PC-3 (cell line): ENCODE measurements at regions of chr6 and their contacts with region 1.

Region 1: DNA sequence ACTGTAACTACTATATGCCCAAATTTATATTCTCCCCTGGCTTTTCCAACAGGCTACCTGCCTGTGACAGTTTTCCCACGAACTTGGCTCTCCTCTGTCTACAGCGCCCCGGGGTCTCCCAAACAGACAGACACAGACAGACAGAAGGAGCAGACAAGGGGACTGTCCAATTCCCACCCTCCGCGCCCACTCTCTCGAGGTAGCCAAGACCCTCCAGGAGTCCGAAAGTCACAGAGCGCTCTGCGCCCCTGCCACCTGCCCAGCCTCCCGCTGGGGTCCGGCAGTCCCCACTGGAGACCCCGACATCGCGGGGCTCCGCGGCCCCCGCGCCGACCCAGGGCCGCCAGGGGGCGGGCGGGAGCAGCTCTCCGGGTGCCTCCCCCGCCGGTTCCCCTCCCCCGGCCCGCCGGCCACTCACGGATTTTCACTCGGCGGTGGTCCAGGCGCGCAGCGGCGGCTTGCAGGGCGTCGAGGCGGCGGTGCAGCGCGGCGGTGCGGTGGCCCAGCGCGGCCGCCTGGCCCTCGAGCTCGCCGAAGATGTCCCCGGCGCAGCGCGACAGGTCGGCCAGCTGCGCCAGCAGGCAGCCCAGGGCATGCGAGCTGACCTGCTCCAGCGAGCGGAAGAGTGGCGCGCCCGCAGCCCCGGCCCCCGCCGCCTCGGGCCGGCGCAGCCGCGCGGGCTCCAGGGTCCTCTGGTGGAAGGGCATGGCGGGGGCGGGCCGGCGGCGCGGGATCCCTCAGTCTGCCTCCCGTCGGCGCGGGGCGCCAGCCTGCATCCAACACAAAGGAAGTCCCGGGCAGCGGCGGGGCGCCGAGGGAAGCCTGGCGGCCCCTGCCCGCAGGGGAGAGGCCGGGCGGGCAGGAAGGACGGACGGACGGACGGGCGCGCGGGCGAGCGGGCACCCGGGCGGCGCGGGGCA is 81.3 kb upstream of the CCDC28A start:
- DNase-seq: peak; percentile 56
- ATAC-seq: peak; percentile 57
- H3K4me3 ChIP-seq: peak overlapping the region; percentile 89
- H3K27ac ChIP-seq: peak overlapping the region; percentile 34
- H3K4me1 ChIP-seq: peaks cover 7% of the 10 kb centered on the region
- H3K27me3 ChIP-seq: no peaks in the 10 kb centered on the region
- CTCF ChIP-seq: peak; percentile 72

Region 2: DNA sequence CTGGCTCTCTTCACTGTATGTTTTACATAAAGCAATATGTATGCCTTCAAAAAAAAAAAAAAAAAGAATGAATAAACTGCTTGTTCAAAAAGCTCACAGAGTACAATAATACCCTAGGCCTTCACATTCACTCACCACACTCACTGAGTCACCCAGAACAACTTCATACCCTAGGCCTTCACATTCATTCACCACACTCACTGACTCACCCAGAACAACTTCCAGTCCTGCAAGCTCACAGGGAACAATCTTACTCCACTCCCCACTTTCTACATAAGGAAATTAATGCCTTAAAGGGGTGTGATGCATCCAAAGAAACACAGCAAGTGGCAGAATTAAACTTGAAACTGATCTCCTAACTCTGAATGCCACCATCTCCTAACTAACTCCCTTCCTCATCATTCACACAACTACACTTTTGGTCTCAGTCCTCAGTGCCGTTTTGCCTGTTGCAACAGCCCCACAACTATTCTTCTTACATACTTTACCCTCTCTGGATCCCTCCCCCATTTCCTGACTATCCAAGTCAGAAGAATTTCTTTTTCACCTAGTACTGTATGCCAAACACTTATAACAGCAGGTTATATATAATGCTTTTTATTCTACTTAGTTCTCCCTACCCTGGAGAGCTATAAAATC is 227.2 kb before region 1 on chr6:
- CTCF ChIA-PET with region 1: no interaction called
- POLR2A ChIA-PET with region 1: no interaction called
- intact Hi-C with region 1: no loop called
- DNase-seq: peak; percentile 88
- ATAC-seq: peak; percentile 70
- H3K4me3 ChIP-seq: peak overlapping the region; percentile 28; the same call in 1 of the 2 replicates
- H3K27ac ChIP-seq: peak overlapping the region; percentile 95
- H3K4me1 ChIP-seq: peaks cover 54% of the 10 kb centered on the region
- H3K27me3 ChIP-seq: no peaks in the 10 kb centered on the region
- CTCF ChIP-seq: no peak

Region 3: GRCh38 chr6:138588805-138589434 is 103.4 kb before region 1 on chr6:
- CTCF ChIA-PET with region 1: no interaction called
- POLR2A ChIA-PET with region 1: no interaction called
- intact Hi-C with region 1: loop called (anchors 1 kb)
- DNase-seq: peak; percentile 69
- ATAC-seq: peak; percentile 32
- H3K4me3 ChIP-seq: no peak overlapping the region
- H3K27ac ChIP-seq: no peak overlapping the region
- H3K4me1 ChIP-seq: peaks cover 13% of the 10 kb centered on the region
- H3K27me3 ChIP-seq: no peaks in the 10 kb centered on the region
- CTCF ChIP-seq: peak; percentile 87

Region 4: DNA sequence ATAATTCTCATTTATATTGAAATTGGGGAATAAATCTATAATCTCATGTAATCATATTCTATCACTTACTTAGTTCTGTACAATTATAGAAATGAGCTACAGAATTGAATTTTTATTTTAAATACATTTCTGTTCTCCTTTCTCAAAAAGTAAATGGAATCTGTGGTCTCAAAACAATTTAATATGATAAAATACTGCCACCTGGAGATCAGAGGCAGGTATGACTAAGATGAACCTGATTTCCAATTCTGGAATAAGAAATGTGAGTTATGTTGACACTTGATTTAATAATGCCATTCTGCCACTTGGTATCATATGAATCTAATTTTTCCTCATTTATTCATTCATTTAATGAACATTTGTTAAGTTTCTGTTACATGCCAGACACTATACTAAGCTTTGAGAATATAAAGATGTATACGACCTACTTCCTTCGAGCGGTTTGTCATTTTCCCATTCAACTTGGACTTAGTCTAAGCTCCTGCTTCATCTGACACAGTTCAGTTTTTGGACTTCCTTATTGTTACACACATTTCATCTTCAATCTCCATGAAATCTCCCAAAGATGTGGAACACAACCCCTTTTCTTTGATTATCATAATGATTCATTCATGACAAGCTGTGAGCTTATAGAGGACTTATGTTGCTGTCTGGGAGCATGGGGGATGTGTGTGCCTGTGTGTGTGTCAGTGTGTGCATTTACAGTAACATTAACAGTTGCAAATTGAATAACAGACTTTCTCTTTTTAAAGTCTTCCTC is 73.8 kb after region 1 on chr6:
- CTCF ChIA-PET with region 1: no interaction called
- POLR2A ChIA-PET with region 1: no interaction called
- intact Hi-C with region 1: loop called (anchors 1 kb)
- DNase-seq: peak; percentile 66
- ATAC-seq: no peak
- H3K4me3 ChIP-seq: no peak overlapping the region
- H3K27ac ChIP-seq: no peak overlapping the region
- H3K4me1 ChIP-seq: no peaks in the 10 kb centered on the region
- H3K27me3 ChIP-seq: no peaks in the 10 kb centered on the region
- CTCF ChIP-seq: peak; percentile 76